ENCODE measurements at regions of chr7 and their contacts with region 1.

Region 1: GRCh38 chr7:140673063-140673773 is 473 bp downstream of the ADCK2 start:
- DNase-seq: peak in 1 of 2 donors; percentile 31
- ATAC-seq: peak; percentile 72 to 75
- H3K4me3 ChIP-seq: peak overlapping the region; percentile 66 to 89 (median 75)
- H3K27ac ChIP-seq: peak overlapping the region; percentile 69 to 83 (median 76)
- H3K4me1 ChIP-seq: peaks cover 16 to 26% of the 10 kb centered on the region in 2 donors
- H3K27me3 ChIP-seq: no peaks in the 10 kb centered on the region
- CTCF ChIP-seq: no peak
- POLR2A ChIP-seq: peak; percentile 18 to 45

Region 2: DNA sequence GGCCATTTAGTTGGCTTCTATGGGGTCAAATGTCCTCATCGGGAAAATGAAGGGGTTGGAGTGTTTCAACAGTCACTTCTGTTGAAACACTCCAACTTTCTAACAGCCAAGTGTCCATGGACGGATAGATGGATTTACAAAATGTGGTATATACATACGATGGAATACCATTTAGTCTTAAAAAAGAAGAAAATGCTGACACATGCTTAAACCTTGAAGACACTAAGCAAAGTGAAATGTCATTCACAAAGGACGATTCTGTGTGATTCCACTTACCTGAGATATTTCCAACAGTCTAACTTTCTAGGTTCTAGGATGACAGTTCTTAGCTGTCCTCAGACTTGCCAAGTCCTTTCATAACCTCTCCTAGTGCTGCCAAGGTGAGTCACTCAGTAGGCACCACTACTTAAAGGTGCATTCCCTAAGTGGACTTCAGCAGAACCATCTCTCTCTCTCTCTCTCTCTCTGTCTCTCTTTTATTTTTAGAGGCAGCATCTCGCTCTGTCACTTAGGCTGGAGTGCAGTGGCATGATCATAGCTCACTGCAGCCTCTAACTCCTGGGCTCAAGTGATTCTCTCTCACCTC is 101.6 kb before region 1 on chr7:
- in situ Hi-C with region 1: no loop called
- intact Hi-C with region 1: no loop called
- DNase-seq: peak; percentile 10 to 56
- ATAC-seq: peak; percentile 98 to 99
- H3K4me3 ChIP-seq: no peak overlapping the region
- H3K27ac ChIP-seq: no peak overlapping the region
- H3K4me1 ChIP-seq: peaks cover 0 to 6% of the 10 kb centered on the region in 2 donors
- H3K27me3 ChIP-seq: no peaks in the 10 kb centered on the region
- CTCF ChIP-seq: no peak
- POLR2A ChIP-seq: no peak

Region 3: GRCh38 chr7:140653319-140654108 is 19.7 kb before region 1 on chr7:
- in situ Hi-C with region 1: no loop called
- intact Hi-C with region 1: loop called (anchors 1 kb)
- DNase-seq: peak; percentile 46 to 48
- ATAC-seq: peak; percentile 71 to 75
- H3K4me3 ChIP-seq: no peak overlapping the region
- H3K27ac ChIP-seq: peak overlapping the region in 2 of 4 donors; percentile 27 to 35
- H3K4me1 ChIP-seq: peaks cover 23% of the 10 kb centered on the region in 2 donors
- H3K27me3 ChIP-seq: no peaks in the 10 kb centered on the region
- CTCF ChIP-seq: peak; percentile 81 to 94 (median 88)
- POLR2A ChIP-seq: no peak

Region 4: GRCh38 chr7:140696680-140697446 is 23.6 kb after region 1 on chr7 and contains the start of gene NDUFB2:
- in situ Hi-C with region 1: no loop called
- intact Hi-C with region 1: loop called (anchors 2 kb)
- DNase-seq: peak; percentile 64 to 73
- ATAC-seq: peak; percentile 94 to 95
- H3K4me3 ChIP-seq: peak within 1 kb of the TSS; percentile 71 to 95 (median 88)
- H3K27ac ChIP-seq: peak within 1 kb of the TSS; percentile 84 to 98 (median 88)
- H3K4me1 ChIP-seq: peaks cover 14 to 16% of the 10 kb centered on the region in 2 donors
- H3K27me3 ChIP-seq: no peaks in the 10 kb centered on the region
- CTCF ChIP-seq: no peak
- POLR2A ChIP-seq: peak; percentile 92 to 94
- total RNA-seq, gene NDUFB2: 449 to 793 (median 538) TPM

Region 5: GRCh38 chr7:140732436-140732835 is 59.2 kb after region 1 on chr7:
- in situ Hi-C with region 1: no loop called
- intact Hi-C with region 1: no loop called
- DNase-seq: no peak
- ATAC-seq: no peak
- H3K4me3 ChIP-seq: no peak overlapping the region
- H3K27ac ChIP-seq: no peak overlapping the region
- H3K4me1 ChIP-seq: no peaks in the 10 kb centered on the region
- H3K27me3 ChIP-seq: no peaks in the 10 kb centered on the region
- CTCF ChIP-seq: no peak
- POLR2A ChIP-seq: no peak

Region 6: DNA sequence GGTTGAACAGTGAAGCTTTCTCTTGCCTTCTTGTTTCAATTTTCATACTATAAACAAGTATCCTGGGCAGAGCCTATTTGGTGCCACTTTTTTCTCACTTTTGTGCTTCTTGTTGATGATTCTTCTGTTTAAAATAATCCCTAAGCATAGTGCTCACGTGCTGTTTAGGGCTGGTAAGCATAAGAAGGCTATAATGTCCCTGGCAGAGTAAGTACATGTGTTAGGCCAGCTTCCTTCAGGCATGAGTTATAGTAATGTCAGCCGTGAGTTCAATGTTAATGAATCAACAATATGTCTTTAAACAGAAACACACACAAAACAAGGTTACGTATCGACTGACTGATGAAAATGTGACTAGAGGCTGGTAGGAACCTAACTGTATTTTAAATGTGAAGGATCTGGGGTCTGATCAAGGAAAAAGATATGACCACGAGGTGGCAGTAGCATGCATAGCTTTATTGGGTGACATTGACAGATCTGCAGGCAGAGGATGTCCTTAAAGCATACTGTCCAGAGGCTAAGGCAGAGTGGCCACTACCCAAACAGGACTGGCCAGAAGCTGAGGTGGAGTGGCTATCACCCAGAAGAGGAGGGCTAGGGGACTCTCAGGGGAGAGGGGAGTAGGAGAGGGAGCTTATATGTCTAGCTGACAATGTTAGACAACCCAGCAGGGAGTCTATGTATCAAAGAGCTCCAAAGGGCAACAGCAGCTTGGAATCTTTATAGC is 137.8 kb after region 1 on chr7:
- in situ Hi-C with region 1: no loop called
- intact Hi-C with region 1: loop called (anchors 5 kb)
- DNase-seq: peak; percentile 18 to 41
- ATAC-seq: peak; percentile 93 to 97
- H3K4me3 ChIP-seq: no peak overlapping the region
- H3K27ac ChIP-seq: no peak overlapping the region
- H3K4me1 ChIP-seq: no peaks in the 10 kb centered on the region
- H3K27me3 ChIP-seq: no peaks in the 10 kb centered on the region
- CTCF ChIP-seq: peak; percentile 53 to 78 (median 70)
- POLR2A ChIP-seq: no peak

Measured in gastrocnemius medialis (tissue), 4 donors.